ENCODE measurements at regions of chr7 and their contacts with region 1.

Region 1: GRCh38 chr7:100167921-100168323 is 495 bp downstream of the GAL3ST4 start:
- DNase-seq: peak in 1 of 5 donors; percentile 28
- H3K4me3 ChIP-seq: peak overlapping the region; percentile 82
- H3K4me3 Mint-ChIP-seq: peak overlapping the region; percentile 19 to 83 (median 75)
- H3K27ac ChIP-seq: peak overlapping the region; percentile 54
- H3K27ac Mint-ChIP-seq: peak overlapping the region in 4 of 8 donors; percentile 12 to 82 (median 57)
- H3K4me1 ChIP-seq: peaks cover 74% of the 10 kb centered on the region
- H3K4me1 Mint-ChIP-seq: peaks cover 49 to 72% (median 59%) of the 10 kb centered on the region in 3 donors
- H3K27me3 ChIP-seq: peaks cover 8% of the 10 kb centered on the region
- H3K27me3 Mint-ChIP-seq: peaks cover 32 to 35% of the 10 kb centered on the region in 2 donors

Region 2: DNA sequence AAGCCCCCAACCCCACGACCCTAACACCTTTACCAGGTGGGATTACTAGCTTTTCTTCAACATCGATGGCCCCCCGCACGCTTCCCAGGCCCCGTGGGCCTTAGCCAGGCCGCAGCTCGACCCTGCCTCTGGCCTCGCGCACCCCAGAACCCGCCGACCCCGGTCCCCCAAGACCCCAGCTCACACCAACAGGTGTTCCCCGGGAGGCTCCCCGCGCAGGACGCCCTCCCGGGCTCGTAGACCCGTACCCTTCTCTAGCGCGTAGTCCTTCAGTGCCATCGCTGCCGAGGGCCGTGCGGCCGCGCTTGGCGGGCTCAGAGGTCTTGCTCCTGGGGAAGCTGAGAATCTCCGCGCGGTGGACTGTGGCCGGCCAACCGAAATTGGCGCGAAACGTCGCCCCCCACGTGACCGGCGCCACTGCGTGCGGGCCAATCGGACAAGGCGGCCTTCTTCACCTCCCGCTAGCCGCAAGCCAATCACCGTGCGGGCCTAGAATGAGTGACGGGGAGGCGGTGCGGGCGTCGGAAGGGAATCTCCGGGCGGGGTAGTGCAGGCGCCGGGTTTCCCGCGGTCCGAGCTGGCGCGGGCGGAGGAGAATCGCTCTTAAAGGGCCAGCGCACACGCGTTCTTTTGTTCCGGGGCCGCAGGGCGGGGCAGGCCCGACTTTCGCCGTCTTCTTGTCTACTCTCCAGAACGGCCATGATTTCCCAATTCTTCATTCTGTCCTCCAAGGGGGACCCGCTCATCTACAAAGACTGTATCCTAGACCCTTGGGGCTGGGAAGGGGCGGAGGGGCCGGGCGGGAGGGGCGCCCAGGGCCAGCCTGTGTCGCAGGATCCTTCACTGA is 66.7 kb before region 1 on chr7 and contains the starts of genes AP4M1 and MCM7:
- CTCF ChIA-PET with region 1: no interaction called
- POLR2A ChIA-PET with region 1: no interaction called
- DNase-seq: peak; percentile 94 to 97 (median 95)
- H3K4me3 ChIP-seq: peak within 1 kb of the TSS; percentile 96
- H3K4me3 Mint-ChIP-seq: peak within 1 kb of the TSS; percentile 90 to 97 (median 94)
- H3K27ac ChIP-seq: peak within 1 kb of the TSS; percentile 85
- H3K27ac Mint-ChIP-seq: peak within 1 kb of the TSS; percentile 94 to 100 (median 96)
- H3K4me1 ChIP-seq: peaks cover 21% of the 10 kb centered on the region
- H3K4me1 Mint-ChIP-seq: peaks cover 39 to 48% (median 45%) of the 10 kb centered on the region in 3 donors
- H3K27me3 ChIP-seq: no peaks in the 10 kb centered on the region
- H3K27me3 Mint-ChIP-seq: peaks cover 0 to 9% of the 10 kb centered on the region in 2 donors
- total RNA-seq, gene AP4M1: 13.8 to 17.3 TPM
- total RNA-seq, gene MCM7: 440 to 452 TPM

Region 3: DNA sequence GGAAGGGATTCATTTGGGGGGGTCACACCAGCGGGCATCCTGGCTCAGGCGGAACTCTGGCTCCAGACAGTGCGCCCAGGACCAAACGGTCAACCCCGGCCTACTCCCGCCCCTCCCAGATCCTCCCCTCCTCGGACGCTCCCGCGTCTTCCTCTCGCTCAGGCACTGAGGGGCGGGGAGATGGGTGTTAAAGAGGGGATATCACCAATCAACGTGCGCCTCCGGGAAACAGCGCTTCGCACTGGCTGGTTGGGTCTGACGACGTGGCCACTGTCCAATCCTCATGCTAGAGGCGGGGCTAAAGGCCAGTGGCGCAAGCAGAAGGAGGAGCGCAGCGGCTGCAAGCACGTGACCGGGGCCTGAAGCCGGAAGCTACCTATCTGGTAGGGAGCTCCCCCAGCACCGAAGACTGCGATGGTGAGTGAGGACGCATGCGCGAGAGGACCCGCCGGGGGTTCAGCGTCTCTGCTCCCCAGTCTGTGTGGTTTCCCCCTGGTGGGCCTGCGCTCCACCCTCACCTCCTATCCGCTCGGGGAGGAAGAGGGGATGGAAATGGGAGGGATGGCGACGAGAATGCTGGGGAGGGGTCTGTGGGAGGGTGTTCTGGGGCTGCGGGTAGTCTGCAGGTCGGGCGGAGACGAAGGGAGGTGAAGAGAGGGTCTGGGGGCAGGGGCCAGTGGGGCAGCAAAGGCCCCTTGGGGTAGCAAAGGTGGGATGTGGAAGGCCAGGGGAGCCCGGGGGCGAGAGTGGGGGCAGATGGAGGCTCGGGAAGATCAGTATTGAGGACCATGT is 19.2 kb before region 1 on chr7 and contains the start of gene LAMTOR4:
- CTCF ChIA-PET with region 1: interaction called, 3 read pairs
- POLR2A ChIA-PET with region 1: interaction called, 13 read pairs
- DNase-seq: peak; percentile 97 to 99 (median 98)
- H3K4me3 ChIP-seq: peak within 1 kb of the TSS; percentile 83
- H3K4me3 Mint-ChIP-seq: peak within 1 kb of the TSS; percentile 82 to 99 (median 95)
- H3K27ac ChIP-seq: peak within 1 kb of the TSS; percentile 87
- H3K27ac Mint-ChIP-seq: peak within 1 kb of the TSS; percentile 85 to 99 (median 96)
- H3K4me1 ChIP-seq: peaks cover 29% of the 10 kb centered on the region
- H3K4me1 Mint-ChIP-seq: peaks cover 27 to 44% (median 43%) of the 10 kb centered on the region in 3 donors
- H3K27me3 ChIP-seq: no peaks in the 10 kb centered on the region
- H3K27me3 Mint-ChIP-seq: no peaks in the 10 kb centered on the region
- total RNA-seq, gene LAMTOR4: 125 to 130 TPM

Region 4: GRCh38 chr7:100221231-100221718 is 53.4 kb after region 1 on chr7:
- CTCF ChIA-PET with region 1: interaction called, 13 read pairs
- POLR2A ChIA-PET with region 1: no interaction called
- DNase-seq: peak; percentile 69 to 93 (median 89)
- H3K4me3 ChIP-seq: peak overlapping the region; percentile 95
- H3K4me3 Mint-ChIP-seq: peak overlapping the region; percentile 89 to 98 (median 95)
- H3K27ac ChIP-seq: peak overlapping the region; percentile 89
- H3K27ac Mint-ChIP-seq: peak overlapping the region; percentile 94 to 100 (median 99)
- H3K4me1 ChIP-seq: peaks cover 52% of the 10 kb centered on the region
- H3K4me1 Mint-ChIP-seq: peaks cover 59 to 77% (median 66%) of the 10 kb centered on the region in 3 donors
- H3K27me3 ChIP-seq: no peaks in the 10 kb centered on the region
- H3K27me3 Mint-ChIP-seq: peaks cover 0 to 7% of the 10 kb centered on the region in 2 donors

Measured in CD8-positive, alpha-beta memory T cell (primary cell).